H1 (cell line): ENCODE measurements at regions of chr2 and their contacts with region 1.

Region 1: GRCh38 chr2:18104595-18105224 is 226.2 kb downstream of the KCNS3 start:
- DNase-seq: no peak
- H3K4me3 ChIP-seq: no peak overlapping the region
- H3K27ac ChIP-seq: no peak overlapping the region
- H3K4me1 ChIP-seq: no peaks in the 10 kb centered on the region
- H3K27me3 ChIP-seq: no peaks in the 10 kb centered on the region
- CTCF ChIP-seq: no peak
- EP300 ChIP-seq: no peak
- POLR2A ChIP-seq: no peak
- RAD21 ChIP-seq: no peak

Region 2: GRCh38 chr2:18117592-18117991 is 12.9 kb after region 1 on chr2:
- CTCF ChIA-PET with region 1: interaction called, 12 read pairs
- POLR2A ChIA-PET with region 1: no interaction called
- DNase-seq: peak in 1 of 2 experiments; percentile 56
- H3K4me3 ChIP-seq: no peak overlapping the region
- H3K27ac ChIP-seq: no peak overlapping the region
- H3K4me1 ChIP-seq: no peaks in the 10 kb centered on the region
- H3K27me3 ChIP-seq: no peaks in the 10 kb centered on the region
- CTCF ChIP-seq: peak; percentile 62 to 73 (median 72)
- EP300 ChIP-seq: no peak
- POLR2A ChIP-seq: no peak
- RAD21 ChIP-seq: peak; percentile 75 to 83